Posterior cingulate gyrus (tissue), 11 donors: ENCODE measurements at regions of chr2 and their contacts with region 1.

Region 1: GRCh38 chr2:158456309-158457066 is at the starts of genes CCDC148 and PKP4:
- DNase-seq: peak; percentile 80 to 99 (median 90)

Region 2: GRCh38 chr2:158179660-158180059 is 276.8 kb before region 1 on chr2:
- intact Hi-C with region 1: loop called (anchors 5 kb)
- DNase-seq: no peak

Region 3: GRCh38 chr2:158391876-158392275 is 64.6 kb before region 1 on chr2:
- intact Hi-C with region 1: no loop called
- DNase-seq: no peak

Region 4: GRCh38 chr2:158745044-158745865 is 288.8 kb after region 1 on chr2:
- intact Hi-C with region 1: loop called (anchors 2 kb)
- DNase-seq: peak in 8 of 10 donors; percentile 58 to 93 (median 72)